A549 (cell line): ENCODE measurements at regions of chr5 and their contacts with region 1.

Region 1: DNA sequence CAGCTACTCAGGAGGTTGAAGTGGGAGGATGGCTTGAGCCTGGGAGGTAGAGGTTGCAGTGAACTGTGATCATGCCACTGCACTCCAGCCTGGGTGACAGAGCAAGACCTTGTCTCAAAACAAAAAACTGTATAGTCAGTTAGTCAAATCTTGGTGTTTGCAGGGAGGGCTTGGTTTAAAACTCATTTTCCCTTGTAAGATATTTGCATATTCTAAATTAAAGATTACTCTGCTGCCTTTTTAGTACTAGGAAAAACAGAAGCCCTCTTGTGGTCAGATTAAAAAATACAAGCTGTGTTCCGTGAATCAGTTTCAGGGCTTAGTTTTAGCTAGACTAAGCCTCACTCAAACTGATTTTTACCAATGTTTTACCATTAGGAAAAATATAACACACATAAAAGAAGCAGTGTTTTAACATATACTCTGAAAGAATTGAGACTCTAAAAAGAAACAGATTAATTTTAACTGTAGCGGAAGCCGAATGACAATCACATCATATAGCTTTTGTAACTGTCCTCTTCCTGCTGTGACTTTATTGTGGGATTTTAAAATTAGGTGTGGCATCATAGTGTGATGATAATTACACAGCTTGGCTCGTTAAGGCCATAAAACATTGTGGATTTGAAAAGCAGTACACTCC is 84.9 kb upstream of the BASP1 start:
- DNase-seq: peak; percentile 37 to 48
- ATAC-seq: 0 out of 6 replicates have a peak, but pooled peaks of 1 of the 2 experiments have one; percentile 25
- H3K4me3 ChIP-seq: no peak overlapping the region
- H3K27ac ChIP-seq: peak overlapping the region; percentile 20 to 67; a peak in 4 of 6 replicates
- H3K4me1 ChIP-seq: peaks cover 25% of the 10 kb centered on the region
- CTCF ChIP-seq: peak; percentile 73
- EP300 ChIP-seq: no peak
- POLR2A ChIP-seq: no peak
- RAD21 ChIP-seq: peak; percentile 59 to 68

Region 2: GRCh38 chr5:16934123-16934522 is 198.4 kb before region 1 on chr5:
- CTCF ChIA-PET with region 1: interaction called, 31 read pairs
- POLR2A ChIA-PET with region 1: interaction called, 7 read pairs
- DNase-seq: peak; percentile 80 to 84
- ATAC-seq: peak; percentile 68 to 82; a peak in 5 of 6 replicates
- H3K4me3 ChIP-seq: peak overlapping the region; percentile 89
- H3K27ac ChIP-seq: peak overlapping the region; percentile 89 to 95
- H3K4me1 ChIP-seq: peaks cover 45% of the 10 kb centered on the region
- CTCF ChIP-seq: peak; percentile 95
- EP300 ChIP-seq: no peak
- POLR2A ChIP-seq: no peak
- RAD21 ChIP-seq: peak; percentile 76 to 82

Region 3: GRCh38 chr5:17105744-17106418 is 26.7 kb before region 1 on chr5:
- CTCF ChIA-PET with region 1: interaction called, 11 read pairs
- POLR2A ChIA-PET with region 1: no interaction called
- DNase-seq: no peak
- ATAC-seq: peak; percentile 30 to 61; a peak in 3 of 6 replicates
- H3K4me3 ChIP-seq: no peak overlapping the region
- H3K27ac ChIP-seq: peak overlapping the region in 1 of 2 experiments; percentile 28; a peak in 3 of 6 replicates
- H3K4me1 ChIP-seq: peaks cover 8% of the 10 kb centered on the region
- CTCF ChIP-seq: no peak
- EP300 ChIP-seq: no peak
- POLR2A ChIP-seq: no peak
- RAD21 ChIP-seq: no peak

Region 4: GRCh38 chr5:17143335-17143734 is 10.8 kb after region 1 on chr5:
- CTCF ChIA-PET with region 1: interaction called, 22 read pairs
- POLR2A ChIA-PET with region 1: no interaction called
- DNase-seq: no peak
- ATAC-seq: no peak
- H3K4me3 ChIP-seq: no peak overlapping the region
- H3K27ac ChIP-seq: peak overlapping the region in 1 of 2 experiments; percentile 44; a peak in 1 of 6 replicates
- H3K4me1 ChIP-seq: peaks cover 18% of the 10 kb centered on the region
- CTCF ChIP-seq: no peak
- EP300 ChIP-seq: no peak
- POLR2A ChIP-seq: no peak
- RAD21 ChIP-seq: no peak

Region 5: GRCh38 chr5:17157916-17158529 is 25.5 kb after region 1 on chr5:
- CTCF ChIA-PET with region 1: interaction called, 32 read pairs
- POLR2A ChIA-PET with region 1: no interaction called
- DNase-seq: peak in 1 of 2 experiments; percentile 79
- ATAC-seq: peak; percentile 85 to 89
- H3K4me3 ChIP-seq: no peak overlapping the region
- H3K27ac ChIP-seq: peak overlapping the region; percentile 62 to 74
- H3K4me1 ChIP-seq: peaks cover 22% of the 10 kb centered on the region
- CTCF ChIP-seq: no peak
- EP300 ChIP-seq: no peak
- POLR2A ChIP-seq: no peak
- RAD21 ChIP-seq: no peak

Region 6: GRCh38 chr5:17282283-17283120 is 149.9 kb after region 1 on chr5:
- CTCF ChIA-PET with region 1: no interaction called
- POLR2A ChIA-PET with region 1: no interaction called
- DNase-seq: no peak
- ATAC-seq: peak in 1 of 2 experiments; percentile 33; a peak in 3 of 6 replicates
- H3K4me3 ChIP-seq: no peak overlapping the region
- H3K27ac ChIP-seq: peak overlapping the region; percentile 5 to 47; a peak in 3 of 6 replicates
- H3K4me1 ChIP-seq: peaks cover 54% of the 10 kb centered on the region
- CTCF ChIP-seq: no peak
- EP300 ChIP-seq: no peak
- POLR2A ChIP-seq: no peak
- RAD21 ChIP-seq: no peak